ENCODE measurements at regions of chr5 and their contacts with region 1.

Region 1: DNA sequence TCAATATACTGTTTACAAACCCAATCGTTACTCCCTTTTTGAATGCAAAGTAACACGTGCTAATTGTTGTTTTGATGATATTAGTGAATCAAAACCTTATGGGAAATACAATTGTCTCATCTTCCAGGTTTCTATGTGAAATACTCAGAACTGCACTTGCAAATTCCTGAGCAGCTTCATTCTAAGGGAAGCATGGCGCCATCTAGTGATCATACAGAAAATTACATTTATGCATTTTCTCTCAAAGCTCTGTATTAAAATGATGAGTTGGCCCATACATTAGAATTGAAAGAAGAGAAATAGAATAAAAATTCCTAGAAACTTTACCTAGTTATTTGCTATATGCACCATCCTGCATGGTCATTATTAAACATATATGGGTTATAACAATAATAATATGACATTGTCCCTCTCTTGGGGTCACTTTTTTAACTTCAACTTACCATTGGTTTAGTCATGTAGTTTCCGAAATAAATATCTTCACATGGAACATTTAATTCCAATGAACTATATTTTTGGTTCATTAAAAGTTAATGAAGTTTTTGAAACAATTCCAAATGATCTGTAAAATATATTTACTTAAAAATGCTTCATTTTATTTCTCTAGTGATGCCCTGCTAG is 220.0 kb downstream of the PDE4D start:
- DNase-seq: peak in 1 of 2 donors; percentile 61
- ATAC-seq: peak in 2 of 3 donors; percentile 38 to 53
- H3K4me3 ChIP-seq: no peak overlapping the region
- H3K4me3 Mint-ChIP-seq: no peak overlapping the region
- H3K27ac ChIP-seq: no peak overlapping the region
- H3K27ac Mint-ChIP-seq: no peak overlapping the region
- H3K4me1 ChIP-seq: no peaks in the 10 kb centered on the region
- H3K4me1 Mint-ChIP-seq: no peaks in the 10 kb centered on the region
- H3K27me3 ChIP-seq: peaks cover 2% of the 10 kb centered on the region
- H3K27me3 Mint-ChIP-seq: peaks cover 0 to 5% of the 10 kb centered on the region in 2 donors
- CTCF ChIP-seq: peak; percentile 94

Region 2: GRCh38 chr5:59390074-59390659 is 283.4 kb before region 1 on chr5:
- intact Hi-C with region 1: loop called (anchors 1 kb)
- DNase-seq: peak in 1 of 2 donors; percentile 59
- ATAC-seq: no peak
- H3K4me3 ChIP-seq: no peak overlapping the region
- H3K4me3 Mint-ChIP-seq: no peak overlapping the region
- H3K27ac ChIP-seq: no peak overlapping the region
- H3K27ac Mint-ChIP-seq: no peak overlapping the region
- H3K4me1 ChIP-seq: no peaks in the 10 kb centered on the region
- H3K4me1 Mint-ChIP-seq: no peaks in the 10 kb centered on the region
- H3K27me3 ChIP-seq: no peaks in the 10 kb centered on the region
- H3K27me3 Mint-ChIP-seq: peaks cover 9 to 19% of the 10 kb centered on the region in 2 donors
- CTCF ChIP-seq: peak; percentile 92

Region 3: DNA sequence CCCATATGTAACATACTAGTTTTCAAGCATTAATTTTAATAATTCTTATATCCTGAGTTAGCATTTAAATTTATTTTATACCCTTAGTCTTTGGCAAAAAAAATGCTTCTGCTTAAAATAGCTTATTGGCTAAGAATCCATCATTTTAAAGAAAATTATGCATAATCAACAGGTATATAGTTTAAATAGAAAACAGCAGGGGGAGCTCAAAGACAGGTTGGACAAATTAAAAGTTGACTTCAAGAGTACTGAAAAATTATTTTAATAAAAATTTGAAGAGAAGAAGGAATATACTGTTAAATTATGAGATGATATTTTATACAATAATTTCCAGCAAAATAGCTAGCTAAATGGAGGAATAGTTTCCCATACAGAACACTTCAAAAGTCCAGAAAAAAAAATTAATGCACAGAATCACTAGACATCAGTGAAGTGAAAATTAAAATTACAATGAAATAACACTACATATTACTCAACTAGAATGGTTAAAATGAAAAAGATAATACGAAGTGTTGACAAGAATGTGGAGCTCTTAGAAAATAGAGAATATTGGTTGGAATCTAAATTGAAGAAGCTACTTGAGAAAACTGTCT is 167.2 kb before region 1 on chr5:
- intact Hi-C with region 1: loop called (anchors 1 kb)
- DNase-seq: peak in 1 of 2 donors; percentile 14
- ATAC-seq: no peak
- H3K4me3 ChIP-seq: no peak overlapping the region
- H3K4me3 Mint-ChIP-seq: no peak overlapping the region
- H3K27ac ChIP-seq: no peak overlapping the region
- H3K27ac Mint-ChIP-seq: no peak overlapping the region
- H3K4me1 ChIP-seq: no peaks in the 10 kb centered on the region
- H3K4me1 Mint-ChIP-seq: no peaks in the 10 kb centered on the region
- H3K27me3 ChIP-seq: no peaks in the 10 kb centered on the region
- H3K27me3 Mint-ChIP-seq: peaks cover 2 to 6% of the 10 kb centered on the region in 2 donors
- CTCF ChIP-seq: peak; percentile 50

Region 4: GRCh38 chr5:59648949-59649921 is 24.3 kb before region 1 on chr5:
- intact Hi-C with region 1: no loop called
- DNase-seq: no peak
- ATAC-seq: no peak
- H3K4me3 ChIP-seq: no peak overlapping the region
- H3K4me3 Mint-ChIP-seq: no peak overlapping the region
- H3K27ac ChIP-seq: no peak overlapping the region
- H3K27ac Mint-ChIP-seq: no peak overlapping the region
- H3K4me1 ChIP-seq: no peaks in the 10 kb centered on the region
- H3K4me1 Mint-ChIP-seq: peaks cover 0 to 4% of the 10 kb centered on the region in 2 donors
- H3K27me3 ChIP-seq: no peaks in the 10 kb centered on the region
- H3K27me3 Mint-ChIP-seq: peaks cover 0 to 3% of the 10 kb centered on the region in 2 donors
- CTCF ChIP-seq: no peak

Region 5: GRCh38 chr5:59660737-59661136 is 12.8 kb before region 1 on chr5:
- intact Hi-C with region 1: no loop called
- DNase-seq: no peak
- ATAC-seq: peak in 1 of 3 donors; percentile 43
- H3K4me3 ChIP-seq: no peak overlapping the region
- H3K4me3 Mint-ChIP-seq: no peak overlapping the region
- H3K27ac ChIP-seq: no peak overlapping the region
- H3K27ac Mint-ChIP-seq: no peak overlapping the region
- H3K4me1 ChIP-seq: peaks cover 8% of the 10 kb centered on the region
- H3K4me1 Mint-ChIP-seq: peaks cover 42 to 43% of the 10 kb centered on the region in 2 donors
- H3K27me3 ChIP-seq: no peaks in the 10 kb centered on the region
- H3K27me3 Mint-ChIP-seq: no peaks in the 10 kb centered on the region
- CTCF ChIP-seq: no peak

Region 6: GRCh38 chr5:59760798-59761348 is 87.3 kb after region 1 on chr5:
- intact Hi-C with region 1: no loop called
- DNase-seq: no peak
- ATAC-seq: no peak
- H3K4me3 ChIP-seq: no peak overlapping the region
- H3K4me3 Mint-ChIP-seq: no peak overlapping the region
- H3K27ac ChIP-seq: no peak overlapping the region
- H3K27ac Mint-ChIP-seq: no peak overlapping the region
- H3K4me1 ChIP-seq: no peaks in the 10 kb centered on the region
- H3K4me1 Mint-ChIP-seq: no peaks in the 10 kb centered on the region
- H3K27me3 ChIP-seq: no peaks in the 10 kb centered on the region
- H3K27me3 Mint-ChIP-seq: peaks cover 4 to 15% of the 10 kb centered on the region in 2 donors
- CTCF ChIP-seq: no peak